Aorta (tissue), 5 donors: ENCODE measurements at regions of chr2 and their contacts with region 1.

Region 1: DNA sequence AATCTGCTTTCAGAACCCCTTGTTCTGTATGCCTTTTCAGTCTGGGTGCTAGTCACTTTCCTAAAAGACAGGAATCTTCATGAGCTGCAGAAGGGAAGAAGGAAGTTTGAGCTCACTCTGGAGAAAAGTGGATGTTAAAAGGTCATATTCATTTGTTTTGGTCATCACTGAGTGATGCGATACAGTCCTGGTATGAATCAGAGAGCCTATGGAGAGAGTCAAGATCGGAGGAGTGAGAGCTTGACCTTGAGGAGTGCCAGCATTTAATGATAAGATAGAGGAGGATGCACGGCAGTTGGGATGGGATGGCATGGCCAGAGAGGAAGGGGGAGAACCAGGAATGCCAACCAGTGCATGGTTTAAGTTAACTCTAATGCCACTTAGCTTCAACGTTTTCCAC is 19.6 kb downstream of the USP39 start:
- DNase-seq: no peak
- ATAC-seq: no peak
- H3K4me3 ChIP-seq: no peak overlapping the region
- H3K27ac ChIP-seq: no peak overlapping the region
- H3K4me1 ChIP-seq: no peaks in the 10 kb centered on the region
- H3K27me3 ChIP-seq: no peaks in the 10 kb centered on the region

Region 2: GRCh38 chr2:85570297-85570696 is 65.3 kb before region 1 on chr2:
- intact Hi-C with region 1: no loop called
- DNase-seq: no peak
- ATAC-seq: no peak
- H3K4me3 ChIP-seq: no peak overlapping the region
- H3K27ac ChIP-seq: no peak overlapping the region
- H3K4me1 ChIP-seq: no peaks in the 10 kb centered on the region
- H3K27me3 ChIP-seq: peaks cover 0 to 2% of the 10 kb centered on the region in 2 donors

Region 3: GRCh38 chr2:85813982-85814801 is 178.6 kb after region 1 on chr2:
- intact Hi-C with region 1: loop called in 1 of 2 experiments (anchors 5 kb)
- DNase-seq: peak; percentile 94 to 98
- ATAC-seq: peak; percentile 94
- H3K4me3 ChIP-seq: no peak overlapping the region
- H3K27ac ChIP-seq: no peak overlapping the region
- H3K4me1 ChIP-seq: peaks cover 0 to 3% of the 10 kb centered on the region in 2 donors
- H3K27me3 ChIP-seq: no peaks in the 10 kb centered on the region